ENCODE measurements at regions of chr1 and their contacts with region 1.

Region 1: DNA sequence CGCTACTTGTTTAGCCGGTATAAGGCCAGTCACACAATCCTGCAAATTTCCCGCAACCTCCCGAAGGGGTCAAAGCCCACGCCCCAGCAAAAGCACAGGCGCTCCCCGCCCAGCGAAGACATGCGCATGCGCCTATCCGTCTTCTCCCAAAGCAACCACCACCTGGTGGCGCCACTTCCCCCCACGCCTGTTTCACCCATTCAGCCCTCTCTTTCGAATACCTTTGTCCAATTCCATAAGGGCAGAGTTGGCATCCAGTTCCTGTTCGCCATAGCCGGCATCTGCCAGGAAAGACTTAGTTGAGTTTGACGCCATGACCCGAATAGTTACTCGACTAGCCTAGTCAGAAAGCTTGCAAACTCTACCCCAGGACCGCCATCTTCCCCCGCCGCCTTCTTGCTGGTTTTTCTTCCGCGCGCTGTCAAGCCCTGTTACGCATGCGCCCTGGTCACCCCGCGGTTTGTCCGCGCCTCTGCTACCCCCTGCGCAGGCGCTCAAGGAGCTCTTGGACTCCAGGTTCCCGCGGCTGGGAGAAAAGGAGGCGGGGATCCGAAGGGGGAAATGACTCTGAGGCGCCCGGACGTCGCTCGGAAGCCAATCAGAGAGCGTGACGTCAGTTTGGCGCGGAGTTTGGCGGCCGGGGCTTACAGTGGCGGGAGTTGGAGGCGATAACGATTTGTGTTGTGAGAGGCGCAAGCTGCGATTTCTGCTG is at the starts of genes DTL and INTS7:
- DNase-seq: peak; percentile 96
- ATAC-seq: peak; percentile 77
- H3K4me3 ChIP-seq: peak within 1 kb of the TSS; percentile 90
- H3K27ac ChIP-seq: peak within 1 kb of the TSS; percentile 98
- H3K4me1 ChIP-seq: peaks cover 17% of the 10 kb centered on the region
- H3K27me3 ChIP-seq: no peaks in the 10 kb centered on the region
- CTCF ChIP-seq: peak; percentile 82 to 97 (median 83)
- EP300 ChIP-seq: no peak
- POLR2A ChIP-seq: peak; percentile 89
- RAD21 ChIP-seq: no peak
- polyA plus RNA-seq, gene DTL: 24.1 to 24.6 TPM
- polyA plus RNA-seq, gene INTS7: 17.1 to 20.1 TPM

Region 2: GRCh38 chr1:211680752-211681327 is 354.4 kb before region 1 on chr1:
- CTCF ChIA-PET with region 1: interaction called, 181 read pairs
- POLR2A ChIA-PET with region 1: interaction called, 26 read pairs
- RAD21 ChIA-PET with region 1: interaction called, 107 read pairs
- SMC1A ChIA-PET with region 1: interaction called, 135 read pairs
- in situ Hi-C with region 1: no loop called
- intact Hi-C with region 1: loop called (anchors 1 kb)
- DNase-seq: peak; percentile 80
- ATAC-seq: peak; percentile 84
- H3K4me3 ChIP-seq: no peak overlapping the region
- H3K27ac ChIP-seq: peak overlapping the region; percentile 38
- H3K4me1 ChIP-seq: peaks cover 16% of the 10 kb centered on the region
- H3K27me3 ChIP-seq: no peaks in the 10 kb centered on the region
- CTCF ChIP-seq: peak; percentile 66 to 87 (median 81); a peak in 5 of 6 replicates
- EP300 ChIP-seq: 0 out of 4 replicates have a peak, but pooled peaks of 1 of the 2 experiments have one; percentile 20
- POLR2A ChIP-seq: no peak
- RAD21 ChIP-seq: peak; percentile 88

Region 3: GRCh38 chr1:211944733-211945500 is 90.4 kb before region 1 on chr1:
- CTCF ChIA-PET with region 1: interaction called, 16 read pairs
- POLR2A ChIA-PET with region 1: interaction called, 3 read pairs
- RAD21 ChIA-PET with region 1: interaction called, 39 read pairs
- SMC1A ChIA-PET with region 1: interaction called, 4 read pairs
- in situ Hi-C with region 1: no loop called
- intact Hi-C with region 1: no loop called
- DNase-seq: no peak
- ATAC-seq: no peak
- H3K4me3 ChIP-seq: no peak overlapping the region
- H3K27ac ChIP-seq: no peak overlapping the region
- H3K4me1 ChIP-seq: peaks cover 8% of the 10 kb centered on the region; the same call in 1 of the 2 replicates
- H3K27me3 ChIP-seq: no peaks in the 10 kb centered on the region
- CTCF ChIP-seq: no peak
- EP300 ChIP-seq: no peak
- POLR2A ChIP-seq: no peak
- RAD21 ChIP-seq: no peak

Region 4: GRCh38 chr1:212012034-212012740 is 23.1 kb before region 1 on chr1:
- CTCF ChIA-PET with region 1: interaction called, 69 read pairs
- POLR2A ChIA-PET with region 1: interaction called, 3 read pairs
- RAD21 ChIA-PET with region 1: interaction called, 29 read pairs
- SMC1A ChIA-PET with region 1: interaction called, 60 read pairs
- in situ Hi-C with region 1: no loop called
- intact Hi-C with region 1: loop called (anchors 1 kb)
- DNase-seq: peak; percentile 38
- ATAC-seq: peak; percentile 100
- H3K4me3 ChIP-seq: no peak overlapping the region
- H3K27ac ChIP-seq: no peak overlapping the region
- H3K4me1 ChIP-seq: no peaks in the 10 kb centered on the region
- H3K27me3 ChIP-seq: no peaks in the 10 kb centered on the region
- CTCF ChIP-seq: peak; percentile 95 to 100 (median 98)
- EP300 ChIP-seq: no peak
- POLR2A ChIP-seq: no peak
- RAD21 ChIP-seq: peak; percentile 97

Region 5: DNA sequence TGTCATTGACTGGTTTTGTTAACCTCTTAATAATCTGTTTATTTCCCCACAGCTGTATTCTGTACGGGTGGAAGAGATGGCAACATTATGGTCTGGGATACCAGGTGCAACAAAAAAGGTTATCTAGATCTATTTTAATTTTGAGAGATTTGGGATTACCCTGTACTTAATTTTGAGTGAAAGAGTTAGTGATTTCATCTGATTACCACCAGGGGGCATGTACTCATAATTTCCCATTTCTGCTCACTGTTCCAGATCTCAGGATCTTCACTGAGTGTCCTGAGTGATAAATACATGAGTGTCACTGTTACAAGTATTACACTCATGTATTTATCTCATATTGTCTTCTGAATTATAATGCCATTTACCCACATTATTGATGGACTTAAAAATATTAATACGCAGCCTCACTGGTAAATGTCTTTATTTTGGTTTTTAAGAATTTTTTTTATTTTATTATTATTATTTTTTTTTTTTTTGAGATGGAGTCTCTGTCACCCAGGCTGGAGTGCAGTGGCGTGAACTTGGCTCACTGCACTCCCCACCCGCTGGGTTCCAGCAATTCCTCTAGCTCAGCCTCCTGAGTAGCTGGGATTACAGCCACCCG is 27.7 kb after region 1 on chr1:
- CTCF ChIA-PET with region 1: interaction called, 27 read pairs
- POLR2A ChIA-PET with region 1: interaction called, 4 read pairs
- RAD21 ChIA-PET with region 1: interaction called, 3 read pairs
- SMC1A ChIA-PET with region 1: interaction called, 7 read pairs
- in situ Hi-C with region 1: no loop called
- intact Hi-C with region 1: no loop called
- DNase-seq: no peak
- ATAC-seq: peak; percentile 83
- H3K4me3 ChIP-seq: no peak overlapping the region
- H3K27ac ChIP-seq: no peak overlapping the region
- H3K4me1 ChIP-seq: no peaks in the 10 kb centered on the region
- H3K27me3 ChIP-seq: no peaks in the 10 kb centered on the region
- CTCF ChIP-seq: peak; percentile 54 to 63 (median 56); a peak in 5 of 6 replicates
- EP300 ChIP-seq: no peak
- POLR2A ChIP-seq: no peak
- RAD21 ChIP-seq: peak; percentile 59

Region 6: DNA sequence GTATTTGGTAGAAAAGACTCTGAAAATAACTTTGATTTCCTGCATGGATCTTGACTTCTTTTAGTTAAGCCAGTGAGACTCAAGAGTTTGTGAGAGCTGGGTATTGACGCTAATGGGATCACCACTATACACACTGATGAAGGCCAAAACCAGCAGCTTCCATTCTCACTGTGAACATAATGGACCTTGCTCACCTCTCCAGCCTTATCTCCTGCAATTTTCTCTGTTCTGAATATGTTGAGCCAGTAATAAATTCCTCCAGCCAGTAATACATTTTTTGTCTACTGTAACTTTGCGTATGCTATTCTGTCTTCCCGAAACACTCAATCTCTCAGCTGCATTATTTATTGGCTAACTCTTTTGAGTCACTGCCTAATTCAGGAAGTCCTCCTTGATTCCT is 138.3 kb after region 1 on chr1:
- CTCF ChIA-PET with region 1: no interaction called
- POLR2A ChIA-PET with region 1: no interaction called
- RAD21 ChIA-PET with region 1: no interaction called
- SMC1A ChIA-PET with region 1: no interaction called
- in situ Hi-C with region 1: no loop called
- intact Hi-C with region 1: no loop called
- DNase-seq: no peak
- ATAC-seq: no peak
- H3K4me3 ChIP-seq: no peak overlapping the region
- H3K27ac ChIP-seq: no peak overlapping the region
- H3K4me1 ChIP-seq: no peaks in the 10 kb centered on the region
- H3K27me3 ChIP-seq: no peaks in the 10 kb centered on the region
- CTCF ChIP-seq: no peak
- EP300 ChIP-seq: no peak
- POLR2A ChIP-seq: no peak
- RAD21 ChIP-seq: no peak